ENCODE measurements at regions of chr9 and their contacts with region 1.

Region 1: DNA sequence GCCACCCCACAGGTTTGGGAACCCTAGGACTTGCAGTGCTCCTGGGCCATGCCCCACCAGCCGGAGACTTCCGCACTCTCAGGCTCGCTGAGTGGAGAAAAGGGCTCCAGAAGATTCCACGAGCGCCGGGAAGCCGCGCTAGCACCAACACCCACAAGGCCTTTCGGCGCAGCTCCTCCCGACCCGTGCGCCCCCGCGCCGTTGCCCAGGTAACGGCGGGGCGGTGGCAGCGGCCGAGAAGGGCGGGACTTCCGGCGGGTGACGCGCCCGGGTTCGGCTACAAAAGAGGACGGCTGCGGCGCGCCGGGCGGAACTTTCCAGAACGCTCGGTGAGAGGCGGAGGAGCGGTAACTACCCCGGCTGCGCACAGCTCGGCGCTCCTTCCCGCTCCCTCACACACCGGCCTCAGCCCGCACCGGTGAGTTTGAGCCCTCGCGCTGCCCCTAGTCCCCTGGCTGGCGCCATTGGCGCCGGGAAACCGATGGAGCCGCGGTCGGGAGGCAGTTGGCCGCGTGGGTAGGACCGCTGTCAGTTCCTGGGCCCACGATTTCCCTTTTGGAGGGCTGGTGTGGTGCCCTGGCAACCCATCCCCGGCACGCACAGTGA is at the start of gene DNAJA1:
- DNase-seq: peak; percentile 97
- H3K4me3 ChIP-seq: peak within 1 kb of the TSS; percentile 86 to 99
- H3K27ac ChIP-seq: peak within 1 kb of the TSS; percentile 94 to 99
- H3K4me1 ChIP-seq: peaks cover 20 to 28% of the 10 kb centered on the region in 2 experiments; a peak in 3 of 4 replicates
- H3K27me3 ChIP-seq: no peaks in the 10 kb centered on the region
- CTCF ChIP-seq: no peak
- EP300 ChIP-seq: peak in 1 of 2 experiments; percentile 28; a peak in 2 of 4 replicates
- RAD21 ChIP-seq: no peak
- polyA plus RNA-seq, gene DNAJA1: 103 and 125 TPM in 2 replicates

Region 2: GRCh38 chr9:33012328-33013069 is 12.6 kb before region 1 on chr9:
- CTCF ChIA-PET with region 1: interaction called, 3 read pairs
- POLR2A ChIA-PET with region 1: interaction called, 11 read pairs
- DNase-seq: no peak
- H3K4me3 ChIP-seq: no peak overlapping the region
- H3K27ac ChIP-seq: no peak overlapping the region
- H3K4me1 ChIP-seq: no peaks in the 10 kb centered on the region
- H3K27me3 ChIP-seq: no peaks in the 10 kb centered on the region
- CTCF ChIP-seq: no peak
- EP300 ChIP-seq: no peak
- RAD21 ChIP-seq: no peak

Region 3: DNA sequence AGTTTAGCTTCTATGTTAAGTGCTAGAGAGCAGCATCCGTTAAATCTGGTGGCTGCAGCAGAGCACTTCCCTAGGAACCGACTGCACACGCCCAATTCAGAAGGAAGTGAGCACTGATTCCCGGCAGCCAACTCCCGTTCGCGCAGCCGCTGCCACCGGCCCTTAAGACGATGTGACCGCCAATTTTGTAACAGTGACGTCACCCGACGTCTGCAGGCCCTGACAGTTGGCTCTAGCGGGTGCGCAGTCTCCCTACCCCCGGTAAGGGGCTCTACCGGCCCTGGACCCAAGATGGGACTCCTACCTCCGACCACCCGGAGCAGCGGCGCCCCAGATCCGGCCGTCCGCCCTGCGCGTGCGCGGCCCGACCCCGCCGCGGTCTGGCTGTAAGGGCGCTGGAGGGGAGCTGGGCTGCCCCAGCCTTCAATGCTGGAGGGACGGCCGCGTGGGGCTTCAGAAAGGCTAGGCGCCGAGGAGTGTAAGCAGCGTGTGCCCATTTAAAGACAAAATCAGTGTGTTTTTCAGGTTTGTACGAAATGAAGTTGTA is 19.1 kb after region 1 on chr9:
- CTCF ChIA-PET with region 1: interaction called, 11 read pairs
- POLR2A ChIA-PET with region 1: interaction called, 17 read pairs
- DNase-seq: peak; percentile 94
- H3K4me3 ChIP-seq: peak overlapping the region; percentile 61 to 66
- H3K27ac ChIP-seq: peak overlapping the region; percentile 72 to 92
- H3K4me1 ChIP-seq: peaks cover 5 to 9% of the 10 kb centered on the region in 2 experiments; a peak in 2 of 4 replicates
- H3K27me3 ChIP-seq: no peaks in the 10 kb centered on the region
- CTCF ChIP-seq: no peak
- EP300 ChIP-seq: no peak
- RAD21 ChIP-seq: no peak

Region 4: DNA sequence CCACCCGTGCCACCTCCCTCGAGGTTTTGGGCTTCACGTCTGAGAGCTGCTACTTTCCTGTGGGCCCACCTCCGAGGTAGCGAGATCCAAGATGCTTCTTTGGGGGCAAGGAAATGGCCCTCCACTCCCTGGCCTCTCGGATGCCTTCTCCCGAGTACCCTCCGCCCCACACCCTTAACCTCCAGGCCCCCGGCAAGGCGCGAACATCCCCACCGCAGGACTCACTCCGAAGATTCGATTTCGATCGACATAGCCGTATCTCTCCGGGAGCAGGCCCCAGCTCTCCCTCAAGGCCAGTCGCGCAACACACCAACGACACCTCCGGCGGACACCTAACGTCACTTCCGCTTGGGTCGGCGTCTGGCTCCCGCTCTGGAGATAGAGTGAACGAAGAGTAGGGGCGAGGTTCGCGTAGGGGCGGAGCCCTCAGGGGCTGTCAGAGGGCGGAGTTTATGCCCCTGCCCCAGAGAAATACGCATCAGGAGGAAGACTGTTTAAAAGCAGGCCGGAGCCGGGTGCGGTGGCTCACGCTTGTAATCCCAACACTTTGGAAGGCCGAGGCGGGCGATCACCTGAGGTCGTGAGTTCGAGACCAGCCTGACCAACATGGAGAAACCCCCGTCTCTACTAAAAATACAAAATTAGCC is 51.4 kb after region 1 on chr9 and contains the start of gene SMU1:
- CTCF ChIA-PET with region 1: no interaction called
- POLR2A ChIA-PET with region 1: interaction called, 15 read pairs
- DNase-seq: peak; percentile 96
- H3K4me3 ChIP-seq: peak within 1 kb of the TSS; percentile 79 to 80
- H3K27ac ChIP-seq: peak within 1 kb of the TSS; percentile 81 to 84
- H3K4me1 ChIP-seq: peaks cover 5 to 6% of the 10 kb centered on the region in 2 experiments; a peak in 3 of 4 replicates
- H3K27me3 ChIP-seq: no peaks in the 10 kb centered on the region
- CTCF ChIP-seq: no peak
- EP300 ChIP-seq: no peak; a peak in 1 of 4 replicates
- RAD21 ChIP-seq: no peak
- polyA plus RNA-seq, gene SMU1: 9.8 and 12.4 TPM in 2 replicates

Region 5: DNA sequence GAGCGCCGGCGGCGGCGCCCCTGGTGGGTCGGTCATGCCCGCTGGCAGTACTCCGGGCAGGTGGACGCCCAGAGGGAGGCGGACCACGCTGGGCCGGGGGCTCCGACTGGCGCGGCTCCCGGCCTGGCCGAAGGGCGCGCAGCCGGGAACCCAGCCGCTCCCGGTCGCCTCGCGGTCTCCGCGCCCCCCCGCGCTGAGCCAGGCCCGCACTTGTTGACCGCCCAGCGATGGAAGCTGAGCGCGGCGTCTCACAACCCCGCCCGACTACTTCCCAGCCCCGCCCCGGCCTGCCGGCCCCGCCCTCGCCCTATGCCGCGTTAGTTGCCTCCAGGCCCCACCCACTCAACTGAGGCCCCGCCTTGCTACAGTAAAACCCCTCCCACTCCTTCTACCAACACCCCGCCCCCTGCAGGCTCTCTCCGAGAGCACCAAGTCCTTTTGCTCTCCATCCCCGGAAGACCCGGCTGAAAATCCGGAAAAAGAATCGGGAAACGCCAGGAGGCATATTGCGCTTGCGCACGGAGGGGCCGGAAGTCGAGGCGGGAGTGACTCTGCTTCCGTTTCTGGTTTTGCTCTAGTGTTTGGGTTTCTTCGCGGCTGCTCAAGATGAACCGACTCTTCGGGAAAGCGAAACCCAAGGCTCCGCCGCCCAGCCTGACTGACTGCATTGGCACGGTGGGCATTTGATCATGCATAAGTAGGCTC is 239.6 kb after region 1 on chr9 and contains the starts of genes BAG1 and CHMP5:
- CTCF ChIA-PET with region 1: no interaction called
- POLR2A ChIA-PET with region 1: no interaction called
- DNase-seq: peak; percentile 97
- H3K4me3 ChIP-seq: peak within 1 kb of the TSS; percentile 56 to 97
- H3K27ac ChIP-seq: peak within 1 kb of the TSS; percentile 58 to 79; a peak in 3 of 4 replicates
- H3K4me1 ChIP-seq: peaks cover 8 to 15% of the 10 kb centered on the region in 2 experiments; a peak in 3 of 4 replicates
- H3K27me3 ChIP-seq: no peaks in the 10 kb centered on the region
- CTCF ChIP-seq: peak; percentile 29
- EP300 ChIP-seq: no peak
- RAD21 ChIP-seq: no peak
- polyA plus RNA-seq, gene BAG1: 40.0 and 49.9 TPM in 2 replicates
- polyA plus RNA-seq, gene CHMP5: 88.3 and 112 TPM in 2 replicates